ENCODE measurements at regions of chr1 and their contacts with region 1.

Region 1: GRCh38 chr1:85307987-85308832 is 31.8 kb upstream of the BCL10 start:
- DNase-seq: peak; percentile 93
- H3K4me3 Mint-ChIP-seq: no peak overlapping the region
- H3K27ac Mint-ChIP-seq: peak overlapping the region; percentile 49
- H3K4me1 Mint-ChIP-seq: peaks cover 37% of the 10 kb centered on the region
- H3K27me3 Mint-ChIP-seq: no peaks in the 10 kb centered on the region
- CTCF ChIP-seq: peak; percentile 95

Region 2: GRCh38 chr1:84823511-84823910 is 484.7 kb before region 1 on chr1:
- CTCF ChIA-PET with region 1: no interaction called
- intact Hi-C with region 1: no loop called
- DNase-seq: no peak
- H3K4me3 Mint-ChIP-seq: no peak overlapping the region
- H3K27ac Mint-ChIP-seq: no peak overlapping the region
- H3K4me1 Mint-ChIP-seq: no peaks in the 10 kb centered on the region
- H3K27me3 Mint-ChIP-seq: no peaks in the 10 kb centered on the region
- CTCF ChIP-seq: no peak

Region 3: DNA sequence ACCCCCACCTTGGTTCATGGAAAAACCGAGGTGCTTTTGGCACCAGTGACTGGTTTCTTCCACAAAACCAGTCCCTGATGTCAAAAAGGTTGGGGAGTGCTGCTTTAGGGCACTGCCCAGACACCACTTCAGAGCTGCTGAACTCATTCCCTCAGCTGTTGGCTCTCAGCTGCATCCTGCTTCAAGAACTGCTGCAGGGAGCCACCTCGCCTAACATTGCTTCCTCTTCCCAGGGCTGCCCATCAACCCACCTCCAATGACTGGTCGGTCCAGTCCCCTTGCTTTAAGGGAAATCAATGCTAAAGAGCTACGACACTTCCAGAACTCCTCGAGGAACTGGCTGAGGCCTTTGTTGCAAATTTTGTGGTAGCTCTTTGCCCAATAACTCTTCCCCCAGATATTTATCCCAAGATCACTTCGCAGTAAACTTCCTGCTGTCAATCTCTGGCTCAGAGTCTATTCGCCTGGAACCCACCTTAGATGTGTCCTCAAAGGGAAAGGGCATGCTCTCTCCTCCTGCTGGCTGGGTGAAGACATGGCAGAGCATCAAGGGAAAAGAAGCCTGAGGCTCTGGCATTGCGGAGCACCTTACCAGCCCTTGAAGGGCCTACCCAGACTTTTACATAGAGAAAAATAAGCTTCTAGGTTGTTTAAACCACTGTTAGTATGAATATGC is 77.8 kb before region 1 on chr1:
- CTCF ChIA-PET with region 1: no interaction called
- intact Hi-C with region 1: no loop called
- DNase-seq: peak; percentile 19
- H3K4me3 Mint-ChIP-seq: peak overlapping the region; percentile 6
- H3K27ac Mint-ChIP-seq: peak overlapping the region; percentile 19
- H3K4me1 Mint-ChIP-seq: peaks cover 19% of the 10 kb centered on the region
- H3K27me3 Mint-ChIP-seq: no peaks in the 10 kb centered on the region
- CTCF ChIP-seq: peak; percentile 56

Region 4: GRCh38 chr1:85344256-85344694 is 36.1 kb after region 1 on chr1:
- CTCF ChIA-PET with region 1: interaction called, 13 read pairs
- intact Hi-C with region 1: no loop called
- DNase-seq: peak; percentile 78
- H3K4me3 Mint-ChIP-seq: peak overlapping the region; percentile 39
- H3K27ac Mint-ChIP-seq: peak overlapping the region; percentile 96
- H3K4me1 Mint-ChIP-seq: peaks cover 79% of the 10 kb centered on the region
- H3K27me3 Mint-ChIP-seq: no peaks in the 10 kb centered on the region
- CTCF ChIP-seq: peak; percentile 75

Region 5: DNA sequence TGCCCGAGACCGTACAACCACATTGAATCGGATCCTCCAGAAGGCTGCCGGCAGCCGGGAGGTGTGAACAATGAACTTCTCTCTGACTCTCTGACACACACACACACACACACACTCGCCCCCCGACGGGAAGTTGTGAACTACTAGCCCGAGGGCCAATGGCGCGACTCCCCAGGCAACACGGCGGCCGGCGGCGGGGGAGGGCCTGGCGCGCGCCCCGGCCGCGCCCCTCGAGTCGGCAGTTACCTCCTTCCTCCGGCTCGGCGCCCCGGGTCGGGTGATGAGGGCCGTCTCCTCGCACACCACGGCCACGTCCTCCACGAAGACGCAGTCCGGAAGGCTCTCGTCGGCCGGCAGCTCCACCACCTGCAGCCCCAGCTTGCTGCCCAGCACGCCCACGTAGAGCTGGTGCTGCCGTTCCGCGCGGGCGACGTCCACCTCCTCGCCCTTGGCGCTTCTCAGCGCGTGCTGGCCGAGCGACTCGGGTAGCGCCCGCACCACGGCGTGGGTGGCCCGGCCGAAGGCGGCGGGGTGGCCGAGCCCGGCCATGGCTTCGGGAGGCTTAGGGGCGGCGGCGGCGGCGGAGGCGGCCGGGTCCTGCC is 156.4 kb after region 1 on chr1:
- CTCF ChIA-PET with region 1: interaction called, 3 read pairs
- intact Hi-C with region 1: loop called (anchors 5 kb)
- DNase-seq: peak; percentile 86
- H3K4me3 Mint-ChIP-seq: peak overlapping the region; percentile 79
- H3K27ac Mint-ChIP-seq: peak overlapping the region; percentile 74
- H3K4me1 Mint-ChIP-seq: peaks cover 34% of the 10 kb centered on the region
- H3K27me3 Mint-ChIP-seq: no peaks in the 10 kb centered on the region
- CTCF ChIP-seq: no peak

Region 6: DNA sequence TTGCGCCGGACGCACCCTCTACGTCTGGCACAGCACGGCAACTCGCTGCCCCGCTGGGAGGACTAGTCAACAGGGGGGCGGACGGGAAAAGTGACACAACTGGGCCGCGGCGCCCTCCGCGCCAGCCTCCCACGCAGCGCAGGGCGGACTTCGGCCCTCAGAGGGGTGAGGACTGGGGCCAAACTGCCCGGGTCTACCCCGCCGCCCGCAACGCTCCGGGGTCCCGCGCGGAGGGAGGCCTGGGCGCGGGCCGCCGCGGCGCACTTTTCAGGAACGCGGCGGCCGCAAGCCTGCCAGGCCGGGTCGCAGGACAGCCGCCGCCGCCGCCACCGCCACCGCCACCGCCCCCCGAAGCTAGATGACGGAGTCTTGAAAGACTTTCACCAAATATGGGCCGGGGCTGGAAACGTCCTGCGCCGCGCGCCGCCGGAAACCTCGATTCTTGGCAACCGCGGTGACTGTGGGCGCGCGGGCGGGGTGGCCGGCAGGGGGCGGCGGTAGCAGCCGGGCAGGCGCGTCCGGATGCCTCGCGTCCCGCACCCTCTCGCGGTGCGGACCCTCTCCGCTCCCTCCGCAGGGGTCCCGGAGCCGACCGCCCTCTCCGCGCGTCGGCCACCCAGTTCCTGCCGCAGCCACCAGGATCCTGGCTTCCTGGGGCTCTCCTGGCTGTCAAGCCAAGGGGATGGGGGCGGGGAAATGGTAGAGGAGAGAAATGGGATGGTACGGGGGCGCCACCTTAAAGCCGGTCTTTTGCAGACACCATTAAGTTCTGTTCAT is 268.6 kb after region 1 on chr1:
- CTCF ChIA-PET with region 1: interaction called, 10 read pairs
- intact Hi-C with region 1: loop called (anchors 5 kb)
- DNase-seq: peak; percentile 93
- H3K4me3 Mint-ChIP-seq: peak overlapping the region; percentile 76
- H3K27ac Mint-ChIP-seq: peak overlapping the region; percentile 92
- H3K4me1 Mint-ChIP-seq: peaks cover 31% of the 10 kb centered on the region
- H3K27me3 Mint-ChIP-seq: no peaks in the 10 kb centered on the region
- CTCF ChIP-seq: peak; percentile 89

Region 7: GRCh38 chr1:85850238-85850637 is 542.0 kb after region 1 on chr1:
- CTCF ChIA-PET with region 1: no interaction called
- intact Hi-C with region 1: loop called (anchors 2 kb)
- DNase-seq: peak; percentile 15
- H3K4me3 Mint-ChIP-seq: no peak overlapping the region
- H3K27ac Mint-ChIP-seq: peak overlapping the region; percentile 71
- H3K4me1 Mint-ChIP-seq: peaks cover 29% of the 10 kb centered on the region
- H3K27me3 Mint-ChIP-seq: no peaks in the 10 kb centered on the region
- CTCF ChIP-seq: no peak

Region 8: GRCh38 chr1:86194491-86195034 is 886.4 kb after region 1 on chr1:
- CTCF ChIA-PET with region 1: no interaction called
- intact Hi-C with region 1: no loop called
- DNase-seq: no peak
- H3K4me3 Mint-ChIP-seq: no peak overlapping the region
- H3K27ac Mint-ChIP-seq: no peak overlapping the region
- H3K4me1 Mint-ChIP-seq: no peaks in the 10 kb centered on the region
- H3K27me3 Mint-ChIP-seq: peaks cover 25% of the 10 kb centered on the region
- CTCF ChIP-seq: no peak